Esophagus muscularis mucosa (tissue), 4 donors: ENCODE measurements at regions of chr20 and their contacts with region 1.

Region 1: GRCh38 chr20:45373353-45374100 is 4.6 kb downstream of the TP53TG5 start:
- DNase-seq: peak; percentile 97
- H3K4me3 ChIP-seq: peak overlapping the region; percentile 52 to 65 (median 62)
- H3K27ac ChIP-seq: peak overlapping the region; percentile 80 to 87 (median 82)
- H3K4me1 ChIP-seq: peaks cover 17 to 25% (median 23%) of the 10 kb centered on the region in 4 donors
- H3K27me3 ChIP-seq: no peaks in the 10 kb centered on the region
- CTCF ChIP-seq: peak; percentile 91 to 94 (median 91)
- EP300 ChIP-seq: no peak
- POLR2A ChIP-seq: no peak

Region 2: DNA sequence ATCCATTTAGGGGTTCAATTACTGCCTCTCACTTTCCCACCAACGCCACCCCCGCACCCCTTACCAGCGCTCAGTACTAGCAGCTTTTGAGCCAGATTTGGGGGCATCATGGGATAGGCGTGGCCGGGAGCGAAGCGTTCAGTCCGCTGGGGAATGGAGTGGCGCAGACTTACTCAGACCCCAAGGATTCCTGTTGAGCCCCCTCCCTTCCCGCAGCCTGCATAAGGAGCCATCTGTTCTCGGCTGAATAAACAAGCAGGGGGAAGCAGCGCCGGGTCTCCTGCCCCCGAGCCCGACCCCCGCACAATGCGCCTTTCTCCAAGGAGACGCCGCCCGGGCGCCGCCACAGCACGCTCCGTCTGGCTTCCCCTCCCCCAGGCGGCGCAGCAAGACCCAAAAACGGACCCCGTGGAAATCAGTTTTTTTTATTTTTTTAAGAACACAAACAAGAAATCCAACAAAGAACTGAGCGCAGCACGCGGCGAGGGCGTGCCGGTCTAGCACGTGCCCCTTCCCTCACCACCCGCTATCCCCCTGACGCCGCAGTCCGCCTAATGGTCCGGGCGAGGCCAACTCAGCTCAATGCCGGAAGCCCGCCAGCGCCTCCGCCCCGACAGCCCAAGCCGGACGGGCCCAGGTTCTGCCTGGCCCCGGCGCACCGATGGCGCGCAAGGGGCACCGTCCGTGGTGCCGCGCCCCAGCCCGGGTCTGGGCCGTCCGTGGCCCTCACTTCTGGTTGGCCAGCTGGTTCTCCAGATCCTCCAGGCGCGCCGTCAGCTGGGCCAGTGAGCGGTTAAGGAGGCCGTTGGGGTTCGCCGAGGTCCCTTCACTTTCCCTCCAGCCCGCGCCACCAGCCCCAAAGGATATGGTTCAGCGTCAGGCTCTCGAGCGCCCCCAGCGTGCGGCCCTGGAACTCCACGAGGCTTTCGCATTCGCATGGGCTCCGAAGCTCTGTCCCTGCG is 80.2 kb before region 1 on chr20:
- intact Hi-C with region 1: no loop called
- DNase-seq: peak; percentile 97
- H3K4me3 ChIP-seq: peak overlapping the region; percentile 56 to 74 (median 60)
- H3K27ac ChIP-seq: peak overlapping the region in 2 of 4 donors; percentile 44 to 53
- H3K4me1 ChIP-seq: peaks cover 15 to 26% (median 22%) of the 10 kb centered on the region in 4 donors
- H3K27me3 ChIP-seq: peaks cover 0 to 51% (median 8%) of the 10 kb centered on the region in 4 donors
- CTCF ChIP-seq: peak; percentile 82 to 100 (median 87)
- EP300 ChIP-seq: no peak
- POLR2A ChIP-seq: no peak

Region 3: GRCh38 chr20:45320948-45321595 is 52.5 kb before region 1 on chr20:
- intact Hi-C with region 1: loop called (anchors 2 kb)
- DNase-seq: no peak
- H3K4me3 ChIP-seq: no peak overlapping the region
- H3K27ac ChIP-seq: no peak overlapping the region
- H3K4me1 ChIP-seq: peaks cover 0 to 13% (median 3%) of the 10 kb centered on the region in 4 donors
- H3K27me3 ChIP-seq: peaks cover 0 to 19% (median 7%) of the 10 kb centered on the region in 4 donors
- CTCF ChIP-seq: no peak
- EP300 ChIP-seq: no peak
- POLR2A ChIP-seq: no peak

Region 4: GRCh38 chr20:45406259-45407066 is 32.9 kb after region 1 on chr20:
- intact Hi-C with region 1: loop called (anchors 5 kb)
- DNase-seq: no peak
- H3K4me3 ChIP-seq: peak overlapping the region; percentile 80 to 95 (median 90)
- H3K27ac ChIP-seq: peak overlapping the region; percentile 96 to 99 (median 98)
- H3K4me1 ChIP-seq: peaks cover 15 to 52% (median 42%) of the 10 kb centered on the region in 4 donors
- H3K27me3 ChIP-seq: no peaks in the 10 kb centered on the region
- CTCF ChIP-seq: peak in 1 of 3 experiments; percentile 3
- EP300 ChIP-seq: no peak
- POLR2A ChIP-seq: no peak

Region 5: GRCh38 chr20:45436732-45437391 is 63.3 kb after region 1 on chr20:
- intact Hi-C with region 1: loop called (anchors 1 kb)
- DNase-seq: peak; percentile 95
- H3K4me3 ChIP-seq: peak overlapping the region; percentile 59 to 77 (median 60)
- H3K27ac ChIP-seq: peak overlapping the region; percentile 80 to 84 (median 82)
- H3K4me1 ChIP-seq: peaks cover 5 to 14% (median 12%) of the 10 kb centered on the region in 4 donors
- H3K27me3 ChIP-seq: no peaks in the 10 kb centered on the region
- CTCF ChIP-seq: peak; percentile 94 to 98 (median 96)
- EP300 ChIP-seq: no peak
- POLR2A ChIP-seq: no peak

Region 6: DNA sequence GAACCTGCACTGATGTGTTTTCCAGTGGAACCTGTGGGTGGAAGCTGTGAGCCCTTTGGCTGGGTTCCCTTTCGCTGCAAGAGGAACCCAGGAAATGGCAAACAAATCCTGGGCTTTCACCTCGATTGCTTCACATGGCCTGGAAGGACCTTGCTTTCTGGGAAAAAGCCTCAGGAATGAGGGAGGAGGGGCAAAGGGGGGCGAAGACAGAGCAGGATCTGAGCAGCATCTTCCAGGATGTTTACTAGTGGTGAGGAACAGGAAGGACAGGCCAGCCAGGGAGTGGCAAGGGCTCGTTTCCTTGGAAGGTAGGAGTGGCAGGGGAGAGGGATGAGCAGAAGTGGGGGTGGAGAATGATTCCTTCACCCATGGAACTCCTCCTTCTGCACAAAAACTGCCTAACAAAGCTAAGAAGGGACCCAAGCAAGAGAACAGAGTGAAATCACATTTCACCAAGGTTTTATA is 1341.8 kb after region 1 on chr20:
- intact Hi-C with region 1: no loop called
- DNase-seq: peak; percentile 94
- H3K4me3 ChIP-seq: no peak overlapping the region
- H3K27ac ChIP-seq: peak overlapping the region in 1 of 4 donors; percentile 5
- H3K4me1 ChIP-seq: peaks cover 2 to 51% (median 41%) of the 10 kb centered on the region in 4 donors
- H3K27me3 ChIP-seq: no peaks in the 10 kb centered on the region
- CTCF ChIP-seq: peak in 1 of 3 experiments; percentile 23
- EP300 ChIP-seq: no peak
- POLR2A ChIP-seq: no peak